Caco-2 (cell line): ENCODE measurements at regions of chr12 and their contacts with region 1.

Region 1: GRCh38 chr12:76621582-76622024 is 62.0 kb upstream of the OSBPL8 start:
- DNase-seq: peak; percentile 73 to 77
- H3K4me3 ChIP-seq: no peak overlapping the region
- H3K4me3 Mint-ChIP-seq: no peak overlapping the region
- H3K27ac Mint-ChIP-seq: no peak overlapping the region
- H3K4me1 ChIP-seq: peaks cover 9% of the 10 kb centered on the region
- H3K4me1 Mint-ChIP-seq: no peaks in the 10 kb centered on the region
- H3K27me3 ChIP-seq: no peaks in the 10 kb centered on the region
- H3K27me3 Mint-ChIP-seq: no peaks in the 10 kb centered on the region
- CTCF ChIP-seq: peak; percentile 80 to 85

Region 2: DNA sequence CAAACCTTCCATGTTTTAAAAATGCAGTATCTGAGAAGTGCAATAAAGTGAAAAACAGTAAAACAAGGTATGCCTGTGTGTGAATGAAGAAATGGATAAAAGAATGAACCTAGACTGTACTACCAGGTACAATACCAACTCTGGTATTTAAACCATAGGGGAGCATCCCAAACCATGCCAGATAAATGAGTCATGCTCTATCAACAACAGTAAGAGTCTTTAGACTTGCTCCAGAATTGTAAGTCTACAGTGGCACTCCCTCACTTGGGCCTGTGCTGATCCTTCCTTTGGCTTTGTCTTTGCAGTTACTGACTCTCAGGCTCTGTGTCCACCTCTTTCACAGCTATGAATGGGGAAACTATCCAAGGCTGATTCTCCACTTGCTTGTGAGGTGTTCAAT is 311.5 kb before region 1 on chr12:
- CTCF ChIA-PET with region 1: no interaction called
- POLR2A ChIA-PET with region 1: no interaction called
- intact Hi-C with region 1: no loop called
- DNase-seq: no peak
- H3K4me3 ChIP-seq: no peak overlapping the region
- H3K4me3 Mint-ChIP-seq: no peak overlapping the region
- H3K27ac Mint-ChIP-seq: no peak overlapping the region
- H3K4me1 ChIP-seq: no peaks in the 10 kb centered on the region
- H3K4me1 Mint-ChIP-seq: no peaks in the 10 kb centered on the region
- H3K27me3 ChIP-seq: no peaks in the 10 kb centered on the region
- H3K27me3 Mint-ChIP-seq: no peaks in the 10 kb centered on the region
- CTCF ChIP-seq: no peak

Region 3: DNA sequence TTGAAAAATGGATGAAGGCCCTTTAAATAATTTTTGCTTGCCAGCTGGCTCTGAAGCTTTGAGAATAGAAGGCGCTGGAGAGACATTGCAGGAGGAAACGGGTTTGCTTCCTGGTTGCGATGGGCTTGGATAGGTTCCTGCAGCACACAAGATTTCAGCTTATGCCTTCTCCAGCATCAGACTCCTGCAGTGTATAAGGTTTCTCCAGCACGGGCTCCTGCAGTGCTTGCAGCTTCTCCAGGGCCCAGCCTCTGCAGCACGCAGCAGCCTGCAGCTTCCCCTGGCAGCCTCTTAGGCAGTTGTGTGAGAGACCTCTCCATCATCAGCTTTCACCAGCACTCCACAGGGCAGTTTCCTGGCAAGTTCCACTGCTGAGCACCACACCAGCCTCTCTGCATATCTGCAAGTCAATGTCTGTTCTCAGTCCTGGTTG is 63.7 kb after region 1 on chr12:
- CTCF ChIA-PET with region 1: no interaction called
- POLR2A ChIA-PET with region 1: no interaction called
- intact Hi-C with region 1: loop called (anchors 5 kb)
- DNase-seq: no peak
- H3K4me3 ChIP-seq: no peak overlapping the region
- H3K4me3 Mint-ChIP-seq: no peak overlapping the region
- H3K27ac Mint-ChIP-seq: no peak overlapping the region
- H3K4me1 ChIP-seq: peaks cover 8% of the 10 kb centered on the region; the same call in 1 of the 2 replicates
- H3K4me1 Mint-ChIP-seq: peaks cover 14% of the 10 kb centered on the region
- H3K27me3 ChIP-seq: no peaks in the 10 kb centered on the region
- H3K27me3 Mint-ChIP-seq: no peaks in the 10 kb centered on the region
- CTCF ChIP-seq: no peak

Region 4: DNA sequence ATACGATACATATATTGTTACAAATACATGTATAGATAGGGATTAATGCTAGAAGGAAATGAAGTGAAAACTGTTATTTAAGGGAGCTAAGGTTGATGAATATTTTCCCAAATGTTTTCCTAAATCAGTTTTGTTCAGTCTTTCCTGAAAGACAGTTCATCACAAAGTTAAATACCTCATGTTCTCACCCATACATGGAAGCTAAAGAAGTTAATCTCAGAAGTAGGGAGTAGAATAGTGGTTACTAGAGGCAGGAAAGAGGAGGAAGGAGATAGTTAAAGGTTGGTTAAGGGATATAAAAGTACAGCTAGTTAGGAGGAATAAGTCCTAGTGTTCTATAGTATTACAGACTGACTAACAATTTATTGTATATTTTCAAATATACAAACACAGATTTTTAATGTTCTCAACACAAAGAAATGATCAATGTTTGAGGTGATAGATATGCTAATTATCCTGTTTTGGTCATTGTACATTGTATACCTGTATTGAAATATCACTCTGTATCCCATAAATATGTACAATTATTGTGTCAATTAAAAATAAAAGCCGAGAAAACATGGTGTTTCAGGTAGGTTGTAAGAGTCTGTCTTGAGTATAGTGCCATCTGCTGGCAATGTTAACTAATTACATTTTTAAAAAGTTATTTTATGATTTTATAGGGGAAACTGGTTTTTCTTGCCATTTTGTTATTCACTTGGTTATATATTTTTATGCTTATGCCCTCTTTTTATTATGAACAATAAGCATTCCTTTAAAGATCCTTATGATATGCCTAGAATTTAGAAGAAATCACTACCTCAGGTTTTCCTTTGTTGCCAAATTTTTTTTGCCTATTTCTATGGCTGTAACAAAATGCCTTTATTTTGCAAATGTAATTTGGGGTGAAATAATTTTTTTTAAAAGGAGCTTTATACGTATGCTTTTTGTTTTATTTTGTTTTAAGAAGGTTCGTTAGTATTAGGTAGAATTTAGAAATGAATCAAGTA is 169.3 kb after region 1 on chr12:
- CTCF ChIA-PET with region 1: interaction called, 6 read pairs
- POLR2A ChIA-PET with region 1: no interaction called
- intact Hi-C with region 1: loop called (anchors 1 kb)
- DNase-seq: peak in 1 of 2 experiments; percentile 14
- H3K4me3 ChIP-seq: no peak overlapping the region
- H3K4me3 Mint-ChIP-seq: no peak overlapping the region
- H3K27ac Mint-ChIP-seq: no peak overlapping the region
- H3K4me1 ChIP-seq: peaks cover 4% of the 10 kb centered on the region; the same call in 1 of the 2 replicates
- H3K4me1 Mint-ChIP-seq: peaks cover 7% of the 10 kb centered on the region
- H3K27me3 ChIP-seq: no peaks in the 10 kb centered on the region
- H3K27me3 Mint-ChIP-seq: no peaks in the 10 kb centered on the region
- CTCF ChIP-seq: peak; percentile 23 to 59

Region 5: DNA sequence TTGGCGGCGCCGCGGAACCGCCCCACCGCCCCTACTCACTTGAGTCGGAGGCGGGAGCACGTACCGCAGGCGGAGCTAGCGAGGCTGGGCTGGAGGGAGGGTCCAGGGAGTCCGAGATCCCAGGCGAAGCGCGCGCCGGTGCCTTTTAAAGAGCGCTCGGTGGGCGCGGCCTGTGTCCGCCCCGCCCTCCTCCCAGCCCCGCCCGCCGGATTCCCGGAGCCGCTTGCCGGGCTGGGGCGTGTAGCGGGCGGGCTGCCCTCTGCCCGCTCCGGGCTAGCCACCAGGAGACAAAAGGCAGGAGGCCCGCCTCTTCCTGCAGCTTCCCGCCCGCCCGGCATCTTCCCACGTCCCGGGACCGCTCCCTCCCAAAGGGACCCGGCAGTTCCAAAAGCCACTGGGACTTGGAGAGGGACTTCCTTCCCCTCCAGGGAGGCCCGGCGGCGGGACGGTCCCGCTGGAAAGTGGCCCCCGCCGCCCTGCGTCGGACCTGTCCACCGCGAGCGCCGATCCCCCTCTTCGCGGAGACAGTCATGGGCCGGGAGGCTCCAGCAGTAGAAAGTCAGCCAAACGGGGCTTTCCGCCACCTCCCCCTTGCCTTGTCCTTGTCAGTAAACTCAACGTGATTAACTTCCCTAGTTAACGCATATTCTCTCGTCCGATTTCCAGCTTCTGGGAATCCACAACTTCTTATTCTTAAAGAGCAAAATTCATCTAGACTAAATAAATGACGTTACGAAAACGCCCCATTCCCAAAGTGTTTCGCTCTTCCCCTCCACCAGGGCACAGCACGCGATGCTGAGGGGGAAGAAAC is 257.5 kb after region 1 on chr12 and contains the start of gene CSRP2:
- CTCF ChIA-PET with region 1: no interaction called
- POLR2A ChIA-PET with region 1: no interaction called
- intact Hi-C with region 1: loop called (anchors 1 kb)
- DNase-seq: peak; percentile 92 to 93
- H3K4me3 ChIP-seq: peak within 1 kb of the TSS; percentile 80
- H3K4me3 Mint-ChIP-seq: peak within 1 kb of the TSS; percentile 85
- H3K27ac Mint-ChIP-seq: peak within 1 kb of the TSS; percentile 91
- H3K4me1 ChIP-seq: peaks cover 4% of the 10 kb centered on the region
- H3K4me1 Mint-ChIP-seq: no peaks in the 10 kb centered on the region
- H3K27me3 ChIP-seq: no peaks in the 10 kb centered on the region
- H3K27me3 Mint-ChIP-seq: no peaks in the 10 kb centered on the region
- CTCF ChIP-seq: no peak
- total RNA-seq, gene CSRP2: 22.2 and 27.9 TPM in 2 replicates

Region 6: GRCh38 chr12:77010691-77011548 is 389.3 kb after region 1 on chr12:
- CTCF ChIA-PET with region 1: interaction called, 19 read pairs
- POLR2A ChIA-PET with region 1: no interaction called
- intact Hi-C with region 1: loop called (anchors 1 kb)
- DNase-seq: peak; percentile 71 to 76
- H3K4me3 ChIP-seq: no peak overlapping the region
- H3K4me3 Mint-ChIP-seq: no peak overlapping the region
- H3K27ac Mint-ChIP-seq: no peak overlapping the region
- H3K4me1 ChIP-seq: no peaks in the 10 kb centered on the region
- H3K4me1 Mint-ChIP-seq: peaks cover 6% of the 10 kb centered on the region
- H3K27me3 ChIP-seq: no peaks in the 10 kb centered on the region
- H3K27me3 Mint-ChIP-seq: peaks cover 2% of the 10 kb centered on the region
- CTCF ChIP-seq: peak; percentile 85 to 95